ENCODE measurements at regions of chr1 and their contacts with region 1.

Region 1: GRCh38 chr1:31715087-31715872 is 11.5 kb upstream of the COL16A1 start:
- DNase-seq: peak; percentile 30
- ATAC-seq: peak; percentile 47
- H3K4me3 Mint-ChIP-seq: no peak overlapping the region
- H3K27ac Mint-ChIP-seq: no peak overlapping the region
- H3K4me1 Mint-ChIP-seq: peaks cover 10% of the 10 kb centered on the region
- H3K27me3 Mint-ChIP-seq: peaks cover 58% of the 10 kb centered on the region

Region 2: GRCh38 chr1:31644560-31645273 is 70.6 kb before region 1 on chr1 and contains the start of gene PEF1:
- CTCF ChIA-PET with region 1: no interaction called
- POLR2A ChIA-PET with region 1: no interaction called
- DNase-seq: peak; percentile 99
- ATAC-seq: peak; percentile 84
- H3K4me3 Mint-ChIP-seq: peak within 1 kb of the TSS; percentile 91
- H3K27ac Mint-ChIP-seq: peak within 1 kb of the TSS; percentile 100
- H3K4me1 Mint-ChIP-seq: peaks cover 26% of the 10 kb centered on the region
- H3K27me3 Mint-ChIP-seq: no peaks in the 10 kb centered on the region
- total RNA-seq, gene PEF1: 55.2 to 58.0 TPM

Region 3: DNA sequence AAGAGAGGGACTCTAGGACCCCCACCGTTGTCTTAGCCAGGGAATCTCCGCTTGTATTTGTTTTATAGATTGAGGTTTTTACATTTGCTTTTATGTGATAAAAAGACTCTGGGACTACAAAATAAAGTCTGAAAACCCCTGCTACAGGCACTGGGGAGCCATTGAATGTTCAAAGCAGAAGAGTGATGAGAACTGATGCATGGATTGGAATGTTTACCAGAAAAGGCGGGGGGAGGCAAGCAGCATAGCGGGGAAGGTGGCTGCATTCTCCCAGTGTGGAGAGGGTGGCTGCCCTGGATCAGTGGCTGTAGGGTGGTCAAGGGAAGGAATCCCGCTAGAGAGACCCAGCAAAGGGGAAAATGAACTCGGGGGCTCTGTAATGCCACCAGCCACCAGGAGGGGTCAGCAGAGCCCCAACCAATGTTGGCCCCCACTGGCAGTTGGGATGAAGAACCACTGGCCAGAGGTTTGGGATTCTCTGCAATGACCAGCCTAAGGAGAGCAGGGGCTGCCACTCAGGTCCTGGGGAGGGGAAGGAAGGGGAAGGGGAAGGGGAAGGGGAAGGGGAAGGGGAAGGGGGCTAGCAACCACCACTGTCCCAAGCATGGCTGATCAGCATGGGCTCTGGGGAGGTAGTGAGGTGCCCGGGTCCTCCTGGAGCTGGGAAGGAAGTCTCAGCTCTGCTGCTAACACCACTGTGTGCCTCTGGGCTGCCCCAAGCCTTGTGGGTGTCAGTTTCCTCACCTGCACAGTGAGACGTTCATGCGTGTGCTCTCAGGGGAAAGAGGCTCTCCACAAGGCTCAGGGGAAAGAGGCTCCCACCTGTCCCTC is 51.4 kb before region 1 on chr1:
- CTCF ChIA-PET with region 1: interaction called, 10 read pairs
- POLR2A ChIA-PET with region 1: no interaction called
- DNase-seq: peak; percentile 59
- ATAC-seq: peak; percentile 38
- H3K4me3 Mint-ChIP-seq: no peak overlapping the region
- H3K27ac Mint-ChIP-seq: no peak overlapping the region
- H3K4me1 Mint-ChIP-seq: no peaks in the 10 kb centered on the region
- H3K27me3 Mint-ChIP-seq: no peaks in the 10 kb centered on the region

Region 4: GRCh38 chr1:31725777-31726535 is 10.7 kb after region 1 on chr1:
- CTCF ChIA-PET with region 1: no interaction called
- POLR2A ChIA-PET with region 1: no interaction called
- DNase-seq: no peak
- ATAC-seq: no peak
- H3K4me3 Mint-ChIP-seq: no peak overlapping the region
- H3K27ac Mint-ChIP-seq: no peak overlapping the region
- H3K4me1 Mint-ChIP-seq: no peaks in the 10 kb centered on the region
- H3K27me3 Mint-ChIP-seq: peaks cover 3% of the 10 kb centered on the region

Measured in activated CD8-positive, alpha-beta T cell treated with anti-CD3 and anti-CD28 coated beads, Interleukin-2, amount 10 ng/mL, durations not matched to agents 7 days and 5 days (primary cell).